ENCODE measurements at regions of chr1 and their contacts with region 1.

Region 1: GRCh38 chr1:96820107-96820506 is 98.5 kb downstream of the PTBP2 start:
- DNase-seq: no peak
- H3K4me3 ChIP-seq: no peak overlapping the region
- H3K27ac ChIP-seq: no peak overlapping the region
- H3K4me1 ChIP-seq: no peaks in the 10 kb centered on the region
- H3K27me3 ChIP-seq: no peaks in the 10 kb centered on the region
- CTCF ChIP-seq: no peak

Region 2: DNA sequence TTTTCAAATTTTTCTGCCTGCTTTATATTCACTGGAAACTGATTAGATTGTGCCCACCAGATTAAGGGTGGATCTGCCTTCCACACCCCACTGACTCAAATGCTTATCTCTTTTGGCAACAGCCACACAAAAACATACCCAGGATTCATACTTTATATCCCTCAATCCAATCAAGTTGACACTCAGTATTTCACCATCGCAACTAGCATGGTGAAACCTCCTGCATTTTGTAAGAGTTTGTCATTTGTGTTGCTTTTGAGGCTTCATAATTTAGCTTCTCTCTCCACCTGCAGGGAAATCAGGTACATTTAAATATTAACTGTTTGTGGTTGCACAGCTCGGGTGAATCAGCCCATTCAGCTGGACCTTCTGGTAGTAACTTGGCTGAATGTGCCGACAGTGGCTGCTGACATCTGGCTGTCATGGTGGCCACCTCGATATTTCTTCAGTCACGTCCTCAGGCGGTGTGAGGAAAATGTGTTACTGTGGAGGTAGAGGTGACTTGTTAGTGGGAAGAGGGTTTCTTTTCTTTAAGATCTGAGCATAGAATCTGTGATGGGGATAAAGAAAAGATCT is 125.5 kb after region 1 on chr1:
- CTCF ChIA-PET with region 1: no interaction called
- POLR2A ChIA-PET with region 1: no interaction called
- intact Hi-C with region 1: no loop called
- DNase-seq: peak in 1 of 2 experiments; percentile 31
- H3K4me3 ChIP-seq: no peak overlapping the region
- H3K27ac ChIP-seq: no peak overlapping the region
- H3K4me1 ChIP-seq: no peaks in the 10 kb centered on the region
- H3K27me3 ChIP-seq: no peaks in the 10 kb centered on the region
- CTCF ChIP-seq: no peak

Region 3: GRCh38 chr1:97314685-97315084 is 494.6 kb after region 1 on chr1:
- CTCF ChIA-PET with region 1: no interaction called
- POLR2A ChIA-PET with region 1: interaction called, 24 read pairs
- intact Hi-C with region 1: no loop called
- DNase-seq: no peak
- H3K4me3 ChIP-seq: no peak overlapping the region
- H3K27ac ChIP-seq: no peak overlapping the region
- H3K4me1 ChIP-seq: no peaks in the 10 kb centered on the region
- H3K27me3 ChIP-seq: no peaks in the 10 kb centered on the region
- CTCF ChIP-seq: no peak